ENCODE measurements at regions of chr1 and their contacts with region 1.

Region 1: GRCh38 chr1:162878000-162878596 is 17.1 kb upstream of the CCDC190 start:
- DNase-seq: peak; percentile 67
- H3K4me3 ChIP-seq: no peak overlapping the region
- H3K27ac ChIP-seq: no peak overlapping the region
- H3K4me1 ChIP-seq: no peaks in the 10 kb centered on the region
- H3K27me3 ChIP-seq: no peaks in the 10 kb centered on the region
- CTCF ChIP-seq: peak; percentile 81 to 89

Region 2: GRCh38 chr1:162612606-162613400 is 265.3 kb before region 1 on chr1:
- CTCF ChIA-PET with region 1: no interaction called
- dilution Hi-C with region 1: no loop called
- in situ Hi-C with region 1: no loop called
- intact Hi-C with region 1: no loop called
- DNase-seq: no peak
- H3K4me3 ChIP-seq: no peak overlapping the region
- H3K27ac ChIP-seq: no peak overlapping the region
- H3K4me1 ChIP-seq: no peaks in the 10 kb centered on the region
- H3K27me3 ChIP-seq: no peaks in the 10 kb centered on the region
- CTCF ChIP-seq: no peak

Region 3: DNA sequence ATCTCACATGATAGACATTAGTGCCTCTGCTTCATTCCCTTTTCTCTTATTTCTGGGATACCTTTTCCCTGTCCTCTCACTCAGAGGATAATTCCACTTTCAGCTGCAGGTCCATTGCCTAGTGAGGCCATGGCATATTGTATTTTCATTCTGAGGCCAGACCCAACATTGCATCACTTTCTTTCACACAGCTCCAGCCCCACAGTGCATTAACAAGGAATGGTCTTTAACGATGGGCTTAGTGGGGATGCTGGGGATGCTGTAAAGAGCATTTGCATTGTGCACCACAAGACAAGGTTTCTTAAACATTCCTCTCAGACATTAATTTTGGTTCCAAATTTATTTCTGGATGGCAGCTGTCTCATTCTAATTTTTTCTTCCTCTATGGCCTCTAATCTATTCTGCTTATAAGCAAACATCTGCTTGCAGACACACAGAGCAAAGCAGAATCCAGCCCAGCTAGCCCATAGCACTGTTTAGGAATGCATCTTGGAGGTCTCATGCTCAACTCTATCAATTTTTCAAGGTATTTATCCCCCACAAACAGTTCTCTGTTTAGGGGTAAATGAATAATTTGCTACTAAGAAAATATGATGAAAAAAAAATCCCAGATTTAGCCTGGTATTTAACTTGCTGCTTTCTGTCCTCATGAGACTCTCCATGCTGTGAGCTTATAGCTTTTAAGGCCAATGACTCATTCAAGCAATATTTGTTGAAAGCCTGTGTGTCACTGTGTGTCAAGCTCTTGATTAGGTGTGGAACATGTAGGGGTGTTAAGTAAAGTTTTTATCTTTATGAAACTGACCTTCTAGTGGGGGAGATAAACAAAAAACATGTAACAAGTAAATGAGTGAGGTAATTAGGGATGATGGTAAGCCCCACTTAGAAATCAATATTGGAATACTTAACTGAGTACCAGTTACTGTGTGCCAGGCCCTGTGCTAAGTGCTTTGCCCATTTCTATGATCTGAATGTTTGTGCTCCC is 27.4 kb after region 1 on chr1:
- CTCF ChIA-PET with region 1: no interaction called
- dilution Hi-C with region 1: no loop called
- in situ Hi-C with region 1: no loop called
- intact Hi-C with region 1: loop called (anchors 2 kb)
- DNase-seq: peak; percentile 82
- H3K4me3 ChIP-seq: no peak overlapping the region
- H3K27ac ChIP-seq: peak overlapping the region; percentile 51
- H3K4me1 ChIP-seq: peaks cover 42% of the 10 kb centered on the region
- H3K27me3 ChIP-seq: no peaks in the 10 kb centered on the region
- CTCF ChIP-seq: no peak

Region 4: GRCh38 chr1:163174524-163175437 is 296.7 kb after region 1 on chr1:
- CTCF ChIA-PET with region 1: interaction called, 6 read pairs
- dilution Hi-C with region 1: loop called (anchors 25 kb)
- in situ Hi-C with region 1: loop called (anchors 10 kb)
- intact Hi-C with region 1: loop called (anchors 1 kb)
- DNase-seq: peak; percentile 20
- H3K4me3 ChIP-seq: no peak overlapping the region
- H3K27ac ChIP-seq: no peak overlapping the region
- H3K4me1 ChIP-seq: no peaks in the 10 kb centered on the region
- H3K27me3 ChIP-seq: no peaks in the 10 kb centered on the region
- CTCF ChIP-seq: peak; percentile 78 to 92

Region 5: DNA sequence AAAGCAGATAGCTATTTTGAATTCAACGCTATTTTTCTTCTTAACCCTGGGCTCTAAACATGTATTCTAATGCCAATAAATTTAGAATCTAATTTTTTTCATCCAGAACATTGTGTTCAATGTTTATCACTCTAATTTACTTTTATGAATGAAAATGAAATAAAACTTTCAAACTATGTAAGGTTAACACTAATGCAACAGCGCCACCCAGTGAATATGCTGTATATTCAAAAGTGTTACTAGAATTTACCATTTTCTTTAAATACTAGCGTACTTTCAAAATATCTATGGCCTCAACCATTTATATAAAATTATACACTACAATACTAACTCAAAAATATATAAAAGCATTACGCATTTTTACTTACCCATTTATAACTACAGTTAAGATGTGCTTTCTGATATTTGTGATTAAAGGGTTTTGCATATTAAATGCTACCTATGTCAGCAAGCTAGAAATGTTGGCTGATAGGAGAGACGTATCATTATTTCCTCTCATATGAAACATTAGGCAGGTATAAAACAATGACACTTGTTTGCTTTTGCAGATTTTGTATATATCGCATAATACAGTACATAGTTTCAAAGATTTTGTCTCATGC is 437.8 kb after region 1 on chr1:
- CTCF ChIA-PET with region 1: no interaction called
- dilution Hi-C with region 1: loop called (anchors 25 kb)
- in situ Hi-C with region 1: no loop called
- intact Hi-C with region 1: loop called (anchors 1 kb)
- DNase-seq: peak; percentile 10
- H3K4me3 ChIP-seq: no peak overlapping the region
- H3K27ac ChIP-seq: no peak overlapping the region
- H3K4me1 ChIP-seq: peaks cover 7% of the 10 kb centered on the region
- H3K27me3 ChIP-seq: no peaks in the 10 kb centered on the region
- CTCF ChIP-seq: peak; percentile 56 to 63

Region 6: DNA sequence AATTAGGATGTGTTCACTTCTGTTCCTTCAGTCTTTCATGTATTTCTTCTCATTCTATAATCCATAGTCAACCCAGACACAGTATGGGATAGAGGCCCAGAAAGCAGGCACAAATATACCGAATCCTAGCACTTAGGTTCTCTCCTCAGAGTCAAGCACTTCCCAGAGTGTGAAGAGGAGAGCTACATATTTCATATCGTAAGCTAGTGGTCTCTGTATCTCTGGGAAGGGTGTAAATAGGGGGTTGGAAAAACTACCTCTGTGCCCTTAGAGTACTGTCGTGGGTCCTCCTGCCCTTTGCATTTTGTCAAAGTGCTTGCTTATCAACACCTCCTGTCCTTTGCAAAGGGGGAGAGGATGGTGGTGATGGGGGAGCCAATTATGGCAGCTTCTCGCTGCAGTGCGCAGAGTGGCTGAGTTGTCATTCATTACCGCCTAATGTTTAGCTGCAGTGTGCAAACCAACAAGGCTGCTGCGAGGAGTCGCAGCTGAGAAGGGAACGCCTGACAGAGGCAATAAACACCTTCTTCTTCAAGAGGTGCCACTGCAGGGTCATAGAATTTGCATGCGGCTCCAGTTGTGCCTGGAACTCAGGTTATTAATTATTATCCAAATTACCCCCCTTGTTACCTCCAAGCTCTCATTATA is 626.4 kb after region 1 on chr1:
- CTCF ChIA-PET with region 1: interaction called, 11 read pairs
- dilution Hi-C with region 1: no loop called
- in situ Hi-C with region 1: no loop called
- intact Hi-C with region 1: no loop called
- DNase-seq: no peak
- H3K4me3 ChIP-seq: no peak overlapping the region
- H3K27ac ChIP-seq: no peak overlapping the region
- H3K4me1 ChIP-seq: no peaks in the 10 kb centered on the region
- H3K27me3 ChIP-seq: no peaks in the 10 kb centered on the region
- CTCF ChIP-seq: no peak

Measured in mammary epithelial cell (primary cell).